CD4-positive, alpha-beta memory T cell (primary cell): ENCODE measurements at regions of chrX and their contacts with region 1.

Region 1: DNA sequence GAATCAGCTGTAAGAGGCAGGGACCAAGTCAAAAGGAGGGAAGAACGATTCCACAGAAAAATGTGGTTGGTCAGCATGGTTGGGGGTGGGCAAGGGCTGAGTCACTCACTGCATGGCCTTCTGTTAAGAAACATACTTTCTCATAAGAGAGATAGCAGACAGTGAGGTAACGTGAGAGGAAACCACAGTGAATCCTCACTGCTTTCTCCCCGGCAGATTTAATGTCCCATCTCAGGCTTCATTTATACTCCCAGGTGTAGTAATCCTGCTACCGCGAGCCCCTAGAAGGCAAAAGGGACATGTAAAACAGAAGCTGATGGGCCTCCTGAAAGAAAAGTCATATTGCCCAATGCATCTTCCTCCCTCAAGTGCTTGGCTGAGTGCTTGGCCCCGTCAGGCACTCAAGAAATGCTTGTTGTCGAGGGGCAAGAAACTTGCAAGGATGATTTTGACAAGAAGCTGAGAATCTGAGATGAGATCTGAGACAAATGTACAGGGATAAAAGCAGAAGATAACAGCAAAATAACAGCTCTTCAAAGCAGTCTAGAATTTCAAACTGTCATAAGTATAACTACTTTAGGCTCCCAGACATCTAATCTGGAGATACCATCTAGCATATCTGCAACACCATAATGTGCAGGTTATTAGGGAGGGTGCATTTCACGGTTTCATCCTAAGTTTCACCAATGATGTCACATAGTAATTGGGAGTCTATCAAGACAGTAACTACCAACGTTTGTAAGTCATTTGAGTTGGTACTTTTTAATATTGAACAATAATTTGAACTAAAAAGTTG is 40.2 kb downstream of the SH3KBP1 start:
- DNase-seq: peak in 1 of 5 donors; percentile 53
- H3K4me3 ChIP-seq: no peak overlapping the region
- H3K4me3 Mint-ChIP-seq: peak overlapping the region; percentile 57 to 80 (median 64)
- H3K27ac ChIP-seq: peak overlapping the region; percentile 5
- H3K27ac Mint-ChIP-seq: peak overlapping the region; percentile 75 to 92 (median 91)
- H3K4me1 ChIP-seq: peaks cover 52% of the 10 kb centered on the region
- H3K4me1 Mint-ChIP-seq: peaks cover 22 to 54% (median 33%) of the 10 kb centered on the region in 4 donors
- H3K27me3 ChIP-seq: no peaks in the 10 kb centered on the region
- H3K27me3 Mint-ChIP-seq: no peaks in the 10 kb centered on the region

Region 2: GRCh38 chrX:19865567-19866363 is 18.6 kb after region 1 on chrX:
- CTCF ChIA-PET with region 1: no interaction called
- POLR2A ChIA-PET with region 1: no interaction called
- intact Hi-C with region 1: loop called (anchors 2 kb)
- DNase-seq: no peak
- H3K4me3 ChIP-seq: no peak overlapping the region
- H3K4me3 Mint-ChIP-seq: peak overlapping the region in 4 of 8 donors; percentile 47 to 58 (median 54)
- H3K27ac ChIP-seq: no peak overlapping the region
- H3K27ac Mint-ChIP-seq: peak overlapping the region in 4 of 7 donors; percentile 2 to 75 (median 12)
- H3K4me1 ChIP-seq: peaks cover 51% of the 10 kb centered on the region
- H3K4me1 Mint-ChIP-seq: peaks cover 29 to 58% (median 48%) of the 10 kb centered on the region in 4 donors
- H3K27me3 ChIP-seq: no peaks in the 10 kb centered on the region
- H3K27me3 Mint-ChIP-seq: no peaks in the 10 kb centered on the region